Mammary epithelial cell (primary cell): ENCODE measurements at regions of chr20 and their contacts with region 1.

Region 1: DNA sequence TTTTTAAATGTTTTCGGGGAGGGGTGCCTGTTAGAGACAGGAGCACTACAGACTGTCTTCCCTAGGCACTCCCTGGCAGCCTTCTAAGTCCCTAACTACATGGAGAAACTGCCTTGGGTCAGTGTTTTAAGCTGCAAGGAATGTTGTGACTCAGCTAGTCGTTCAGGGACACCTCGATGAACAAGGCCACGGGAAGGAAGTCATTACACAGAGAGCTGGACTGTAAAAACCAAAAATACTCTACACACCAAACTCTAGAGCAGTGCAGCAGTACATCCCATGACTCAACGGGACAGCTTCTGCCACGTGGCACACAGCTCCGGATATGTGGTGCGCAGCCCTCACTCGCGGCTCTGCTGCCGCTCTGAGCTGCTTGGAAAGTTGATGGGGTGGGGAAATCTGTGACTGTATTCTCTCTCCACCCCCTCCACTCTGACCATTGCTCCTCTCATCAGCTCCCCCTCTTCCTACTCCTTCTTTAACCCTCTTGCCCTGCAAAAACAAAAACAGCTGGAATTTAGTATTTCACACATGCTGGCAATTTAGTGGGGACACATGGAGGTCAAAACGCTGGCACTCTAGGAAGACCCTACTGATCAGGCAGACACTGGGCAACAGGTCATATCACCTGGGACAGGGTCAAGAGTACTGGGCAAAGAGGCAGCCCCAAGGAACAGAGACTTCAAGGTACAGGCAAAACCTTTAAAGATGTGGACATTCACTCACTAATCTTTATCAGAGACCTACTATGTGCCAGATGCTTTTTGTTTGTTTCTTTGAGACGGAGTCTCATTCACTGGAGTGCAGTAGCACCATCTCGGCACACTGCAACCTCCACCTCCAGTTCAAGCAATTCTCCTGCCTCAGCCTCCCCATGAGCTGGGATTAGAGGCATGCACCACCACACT is 10.9 kb upstream of the LPIN3 start:
- DNase-seq: peak; percentile 95
- H3K4me3 ChIP-seq: no peak overlapping the region
- H3K27ac ChIP-seq: peak overlapping the region; percentile 71
- H3K4me1 ChIP-seq: peaks cover 22% of the 10 kb centered on the region
- H3K27me3 ChIP-seq: no peaks in the 10 kb centered on the region
- CTCF ChIP-seq: no peak

Region 2: GRCh38 chr20:39468703-39469102 is 1861.0 kb before region 1 on chr20:
- CTCF ChIA-PET with region 1: no interaction called
- dilution Hi-C with region 1: no loop called
- in situ Hi-C with region 1: no loop called
- intact Hi-C with region 1: no loop called
- DNase-seq: no peak
- H3K4me3 ChIP-seq: no peak overlapping the region
- H3K27ac ChIP-seq: no peak overlapping the region
- H3K4me1 ChIP-seq: no peaks in the 10 kb centered on the region
- H3K27me3 ChIP-seq: no peaks in the 10 kb centered on the region
- CTCF ChIP-seq: no peak

Region 3: GRCh38 chr20:41261790-41262717 is 67.6 kb before region 1 on chr20:
- CTCF ChIA-PET with region 1: no interaction called
- dilution Hi-C with region 1: no loop called
- in situ Hi-C with region 1: no loop called
- intact Hi-C with region 1: loop called (anchors 5 kb)
- DNase-seq: peak; percentile 81
- H3K4me3 ChIP-seq: no peak overlapping the region
- H3K27ac ChIP-seq: peak overlapping the region; percentile 15
- H3K4me1 ChIP-seq: peaks cover 6% of the 10 kb centered on the region
- H3K27me3 ChIP-seq: no peaks in the 10 kb centered on the region
- CTCF ChIP-seq: no peak